ENCODE measurements at regions of chr7 and their contacts with region 1.

Region 1: DNA sequence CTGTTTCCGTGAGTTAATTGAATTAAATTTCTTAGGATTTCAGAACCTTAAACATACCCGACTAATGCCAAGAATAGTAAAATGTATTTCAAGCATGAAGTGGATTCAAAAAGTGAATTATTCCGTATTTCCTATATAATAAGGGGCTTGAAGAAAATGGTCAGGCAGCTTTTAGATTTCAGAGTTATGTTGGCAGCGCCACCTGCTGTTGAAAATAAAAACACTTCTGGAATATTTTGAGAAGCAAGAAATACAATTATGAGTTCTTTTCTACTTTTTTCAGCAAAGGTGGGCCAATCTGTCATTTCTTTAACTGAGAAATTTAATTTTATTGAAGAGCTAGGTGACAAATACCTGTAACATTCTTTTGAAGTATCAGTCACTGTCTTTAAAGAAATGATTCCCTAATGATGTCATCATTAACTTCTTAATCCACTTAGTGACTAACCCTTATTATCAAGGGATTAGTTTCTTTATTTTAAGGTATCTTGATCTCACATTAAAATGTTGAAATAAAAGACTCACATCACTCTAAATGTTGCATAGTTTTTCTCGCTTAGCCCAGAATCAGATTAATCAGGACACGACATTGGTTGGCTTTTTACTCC is 36.6 kb upstream of the AGR3 start:
- DNase-seq: no peak
- H3K4me3 ChIP-seq: no peak overlapping the region
- H3K27ac ChIP-seq: no peak overlapping the region
- H3K4me1 ChIP-seq: peaks cover 0 to 12% (median 10%) of the 10 kb centered on the region in 4 donors
- H3K27me3 ChIP-seq: no peaks in the 10 kb centered on the region
- CTCF ChIP-seq: peak; percentile 28 to 63 (median 51)
- EP300 ChIP-seq: no peak
- POLR2A ChIP-seq: no peak

Region 2: GRCh38 chr7:16604054-16604453 is 314.3 kb before region 1 on chr7:
- intact Hi-C with region 1: loop called (anchors 10 kb)
- DNase-seq: no peak
- H3K4me3 ChIP-seq: no peak overlapping the region
- H3K27ac ChIP-seq: no peak overlapping the region
- H3K4me1 ChIP-seq: peaks cover 0 to 6% (median 0%) of the 10 kb centered on the region in 4 donors
- H3K27me3 ChIP-seq: no peaks in the 10 kb centered on the region
- CTCF ChIP-seq: no peak
- EP300 ChIP-seq: no peak
- POLR2A ChIP-seq: no peak

Region 3: GRCh38 chr7:16801111-16801542 is 117.3 kb before region 1 on chr7:
- intact Hi-C with region 1: loop called (anchors 10 kb)
- DNase-seq: no peak
- H3K4me3 ChIP-seq: no peak overlapping the region
- H3K27ac ChIP-seq: no peak overlapping the region
- H3K4me1 ChIP-seq: no peaks in the 10 kb centered on the region
- H3K27me3 ChIP-seq: no peaks in the 10 kb centered on the region
- CTCF ChIP-seq: peak in 1 of 4 experiments; percentile 38
- EP300 ChIP-seq: no peak
- POLR2A ChIP-seq: no peak

Region 4: DNA sequence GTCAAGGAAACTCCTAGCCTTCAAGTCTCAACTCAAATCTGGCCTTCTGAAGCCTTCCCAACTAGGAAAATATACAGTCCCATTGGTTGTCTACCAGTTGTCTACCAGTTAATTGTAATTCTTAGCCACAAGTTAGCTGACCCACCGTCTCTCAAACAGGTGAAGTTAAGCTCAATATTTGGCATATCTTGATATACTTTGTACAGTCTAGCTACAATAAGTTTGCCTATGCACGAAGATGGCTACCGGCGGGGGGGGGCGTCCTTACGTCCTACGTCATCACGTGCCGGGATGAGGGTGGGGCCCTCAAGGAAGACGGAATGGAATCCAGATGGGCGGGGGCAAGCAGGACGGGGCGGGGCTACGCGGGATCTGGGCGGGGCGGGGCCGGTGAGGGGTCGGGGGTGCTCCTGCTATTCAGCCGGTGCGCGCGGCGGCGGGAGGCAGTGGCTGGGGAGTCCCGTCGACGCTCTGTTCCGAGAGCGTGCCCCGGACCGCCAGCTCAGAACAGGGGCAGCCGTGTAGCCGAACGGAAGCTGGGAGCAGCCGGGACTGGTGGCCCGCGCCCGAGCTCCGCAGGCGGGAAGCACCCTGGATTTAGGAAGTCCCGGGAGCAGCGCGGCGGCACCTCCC is 379.9 kb after region 1 on chr7 and contains the start of gene AHR:
- intact Hi-C with region 1: no loop called
- DNase-seq: peak; percentile 98
- H3K4me3 ChIP-seq: peak within 1 kb of the TSS; percentile 93 to 99 (median 95)
- H3K27ac ChIP-seq: peak within 1 kb of the TSS; percentile 91 to 97 (median 93)
- H3K4me1 ChIP-seq: peaks cover 0 to 24% (median 9%) of the 10 kb centered on the region in 4 donors
- H3K27me3 ChIP-seq: no peaks in the 10 kb centered on the region
- CTCF ChIP-seq: no peak
- EP300 ChIP-seq: no peak
- POLR2A ChIP-seq: peak; percentile 80 to 83
- total RNA-seq, gene AHR: 41.8 to 76.0 (median 49.8) TPM

Region 5: GRCh38 chr7:17548014-17548653 is 629.7 kb after region 1 on chr7:
- intact Hi-C with region 1: no loop called
- DNase-seq: no peak
- H3K4me3 ChIP-seq: no peak overlapping the region
- H3K27ac ChIP-seq: peak overlapping the region in 1 of 4 donors; percentile 0
- H3K4me1 ChIP-seq: peaks cover 0 to 16% (median 4%) of the 10 kb centered on the region in 4 donors
- H3K27me3 ChIP-seq: no peaks in the 10 kb centered on the region
- CTCF ChIP-seq: no peak
- EP300 ChIP-seq: no peak
- POLR2A ChIP-seq: no peak